H1 (cell line): ENCODE measurements at regions of chr19 and their contacts with region 1.

Region 1: DNA sequence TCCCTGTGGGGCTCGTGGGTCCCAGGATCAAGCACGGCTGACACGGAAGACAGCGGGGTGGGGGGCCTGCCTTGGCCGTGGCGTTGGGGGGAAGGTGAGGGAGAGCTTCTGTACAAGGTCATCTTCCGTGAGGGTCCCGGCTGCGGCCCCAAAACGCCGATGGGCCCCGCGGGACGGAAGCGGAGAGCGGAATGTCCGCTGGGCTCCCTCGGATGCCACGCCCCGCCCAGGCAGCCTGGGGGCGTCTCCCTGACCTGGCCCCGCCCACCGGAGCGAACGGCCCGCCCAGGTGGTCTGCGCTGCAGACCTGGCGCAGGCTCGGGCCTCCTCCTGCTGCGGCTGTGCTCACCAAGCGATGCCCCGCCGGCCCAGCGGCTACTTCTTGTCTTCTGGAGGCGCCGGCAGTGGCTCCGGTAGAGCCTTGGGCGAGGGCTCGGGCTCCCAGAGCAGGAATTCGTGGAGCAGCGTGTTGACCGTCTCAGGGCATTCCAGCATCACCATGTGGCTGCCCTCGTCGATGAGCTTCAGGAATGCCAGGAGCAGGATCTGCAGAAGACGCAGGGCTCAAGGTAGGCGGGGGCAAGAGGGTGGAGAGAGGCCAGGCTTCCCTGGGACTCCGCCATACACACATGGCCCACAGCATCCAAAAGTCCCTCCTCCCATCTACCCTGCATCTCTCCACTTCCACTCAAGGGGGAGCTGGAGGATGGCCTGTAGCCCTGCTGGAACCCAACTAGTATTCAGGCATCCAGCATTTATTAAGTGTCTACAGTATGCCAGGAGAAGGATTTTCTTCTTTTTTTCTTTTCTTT is 10.7 kb downstream of the ABHD8 start:
- DNase-seq: peak; percentile 82 to 98
- H3K4me3 ChIP-seq: peak overlapping the region; percentile 44 to 67 (median 58)
- H3K27ac ChIP-seq: peak overlapping the region; percentile 79
- H3K4me1 ChIP-seq: peaks cover 0 to 5% (median 4%) of the 10 kb centered on the region in 4 experiments; a peak in 5 of 7 replicates
- H3K27me3 ChIP-seq: no peaks in the 10 kb centered on the region
- CTCF ChIP-seq: peak; percentile 69 to 81 (median 74)
- EP300 ChIP-seq: no peak
- POLR2A ChIP-seq: peak; percentile 65 to 93
- RAD21 ChIP-seq: peak; percentile 72 to 74

Region 2: DNA sequence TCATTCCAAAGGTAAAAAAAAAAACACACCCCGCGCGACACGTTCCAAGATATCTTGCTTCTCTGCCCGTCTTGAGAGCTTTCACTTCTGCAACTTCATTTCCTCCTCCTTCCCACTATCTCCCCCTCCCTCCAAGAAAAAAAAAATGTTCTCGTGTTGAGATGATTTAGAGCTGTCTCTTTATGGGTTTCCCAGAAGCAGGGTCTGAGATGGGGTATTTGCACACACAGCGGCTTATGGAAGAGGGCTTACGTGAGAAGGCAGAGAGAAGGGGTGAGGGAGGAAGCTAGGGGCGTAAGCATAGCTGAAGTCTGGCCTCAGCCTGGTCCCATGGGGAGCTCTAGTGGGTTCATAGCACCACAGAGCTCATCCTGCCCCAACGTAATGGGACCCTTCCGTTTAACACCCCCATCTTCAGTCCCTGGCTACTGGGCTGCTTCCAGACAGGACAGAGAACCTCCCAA is 108.6 kb before region 1 on chr19:
- CTCF ChIA-PET with region 1: no interaction called
- POLR2A ChIA-PET with region 1: no interaction called
- DNase-seq: no peak
- H3K4me3 ChIP-seq: no peak overlapping the region
- H3K27ac ChIP-seq: no peak overlapping the region
- H3K4me1 ChIP-seq: peaks cover 0 to 11% (median 8%) of the 10 kb centered on the region in 4 experiments; a peak in 6 of 7 replicates
- H3K27me3 ChIP-seq: no peaks in the 10 kb centered on the region
- CTCF ChIP-seq: no peak
- EP300 ChIP-seq: no peak
- POLR2A ChIP-seq: no peak
- RAD21 ChIP-seq: no peak

Region 3: DNA sequence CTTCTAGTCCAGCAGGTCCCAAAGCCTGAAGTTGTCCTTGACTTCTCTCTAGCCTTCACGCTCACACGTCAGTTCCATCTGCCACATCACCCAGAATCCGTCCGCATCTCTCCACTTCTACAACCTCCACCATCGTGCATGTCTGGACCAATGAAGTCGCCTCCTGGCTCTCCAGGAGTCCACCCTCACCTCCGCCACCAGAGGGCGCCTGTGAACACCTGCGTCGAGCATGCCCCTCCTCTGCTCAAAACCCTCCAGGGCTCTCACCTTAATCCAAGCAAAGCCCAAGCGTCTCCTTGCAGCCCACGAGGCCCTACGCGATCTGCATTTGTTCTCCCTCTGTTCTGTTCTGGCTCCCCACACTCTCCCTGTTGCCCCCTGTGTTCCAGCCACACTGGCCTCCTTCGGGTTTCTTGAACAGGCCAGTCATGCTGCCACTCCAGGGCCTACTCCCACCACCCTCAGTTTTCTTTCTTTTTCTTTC is 31.6 kb before region 1 on chr19:
- CTCF ChIA-PET with region 1: interaction called, 5 read pairs
- POLR2A ChIA-PET with region 1: interaction called, 17 read pairs
- DNase-seq: peak; percentile 90 to 95
- H3K4me3 ChIP-seq: no peak overlapping the region
- H3K27ac ChIP-seq: peak overlapping the region; percentile 60; the same call in 1 of the 2 replicates
- H3K4me1 ChIP-seq: peaks cover 0 to 5% (median 1%) of the 10 kb centered on the region in 4 experiments; a peak in 4 of 7 replicates
- H3K27me3 ChIP-seq: no peaks in the 10 kb centered on the region
- CTCF ChIP-seq: peak; percentile 81 to 98 (median 94)
- EP300 ChIP-seq: no peak
- POLR2A ChIP-seq: no peak
- RAD21 ChIP-seq: peak; percentile 53 to 71; a peak in 3 of 4 replicates

Region 4: DNA sequence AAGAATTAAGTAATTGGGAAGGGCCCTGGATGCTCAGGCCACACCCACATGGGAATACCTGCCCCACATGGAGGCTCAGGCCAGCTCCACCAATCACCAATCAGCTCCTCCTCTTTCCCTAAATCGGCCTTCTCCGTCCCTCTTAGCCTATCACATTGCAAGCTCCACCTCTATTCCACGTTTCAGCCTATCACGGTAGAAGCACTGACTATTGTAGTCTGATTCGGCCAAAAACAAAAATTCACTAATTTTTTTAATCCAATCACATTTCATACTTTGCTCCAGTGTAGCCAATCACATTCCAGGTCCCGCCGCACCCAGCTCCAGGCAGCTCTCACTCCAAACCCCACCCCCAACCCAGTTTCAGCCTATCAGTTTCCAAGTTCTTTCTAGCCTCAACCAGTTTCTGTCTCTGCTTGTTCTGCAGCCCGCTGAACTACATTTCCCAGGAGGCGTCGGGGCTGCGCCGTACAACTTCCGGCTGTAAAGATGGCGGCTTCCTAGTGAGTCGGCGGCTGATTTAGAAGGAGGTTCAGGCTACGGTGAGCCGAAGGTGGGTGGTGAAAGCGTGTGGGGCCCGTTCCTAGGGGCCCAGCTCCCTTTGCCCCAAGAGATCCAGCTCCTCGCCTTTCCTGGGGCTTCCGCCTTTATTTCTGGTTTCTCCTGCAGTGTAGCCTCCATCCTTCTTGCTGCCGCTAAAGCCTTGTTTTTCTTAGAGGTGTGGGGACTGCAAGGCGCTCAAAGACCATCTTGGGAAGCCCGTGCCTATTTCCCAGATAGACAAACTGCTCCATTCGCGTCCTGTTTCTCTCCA is 25.3 kb before region 1 on chr19 and contains the start of gene BABAM1:
- CTCF ChIA-PET with region 1: interaction called, 5 read pairs
- POLR2A ChIA-PET with region 1: interaction called, 17 read pairs
- DNase-seq: peak; percentile 88 to 96
- H3K4me3 ChIP-seq: peak within 1 kb of the TSS; percentile 71 to 100 (median 95)
- H3K27ac ChIP-seq: peak within 1 kb of the TSS; percentile 60; the same call in 1 of the 2 replicates
- H3K4me1 ChIP-seq: peaks cover 0 to 8% (median 2%) of the 10 kb centered on the region in 4 experiments; a peak in 5 of 7 replicates
- H3K27me3 ChIP-seq: no peaks in the 10 kb centered on the region
- CTCF ChIP-seq: no peak
- EP300 ChIP-seq: no peak
- POLR2A ChIP-seq: peak; percentile 50 to 94
- RAD21 ChIP-seq: no peak
- total RNA-seq, gene BABAM1: 127 and 134 TPM in 2 replicates

Region 5: GRCh38 chr19:17305517-17306284 is 13.2 kb after region 1 on chr19 and contains the start of gene MRPL34:
- CTCF ChIA-PET with region 1: interaction called, 29 read pairs
- POLR2A ChIA-PET with region 1: interaction called, 67 read pairs
- DNase-seq: peak; percentile 96 to 100
- H3K4me3 ChIP-seq: peak within 1 kb of the TSS; percentile 75 to 95 (median 80)
- H3K27ac ChIP-seq: peak within 1 kb of the TSS; percentile 81
- H3K4me1 ChIP-seq: peaks cover 14 to 28% (median 19%) of the 10 kb centered on the region in 4 experiments
- H3K27me3 ChIP-seq: no peaks in the 10 kb centered on the region
- CTCF ChIP-seq: peak; percentile 67 to 88 (median 81)
- EP300 ChIP-seq: peak; percentile 23 to 61; a peak in 1 of 3 replicates
- POLR2A ChIP-seq: peak; percentile 19 to 66
- RAD21 ChIP-seq: peak; percentile 47 to 63
- total RNA-seq, gene MRPL34: 99.6 and 100 TPM in 2 replicates